ENCODE measurements at regions of chr3 and their contacts with region 1.

Region 1: DNA sequence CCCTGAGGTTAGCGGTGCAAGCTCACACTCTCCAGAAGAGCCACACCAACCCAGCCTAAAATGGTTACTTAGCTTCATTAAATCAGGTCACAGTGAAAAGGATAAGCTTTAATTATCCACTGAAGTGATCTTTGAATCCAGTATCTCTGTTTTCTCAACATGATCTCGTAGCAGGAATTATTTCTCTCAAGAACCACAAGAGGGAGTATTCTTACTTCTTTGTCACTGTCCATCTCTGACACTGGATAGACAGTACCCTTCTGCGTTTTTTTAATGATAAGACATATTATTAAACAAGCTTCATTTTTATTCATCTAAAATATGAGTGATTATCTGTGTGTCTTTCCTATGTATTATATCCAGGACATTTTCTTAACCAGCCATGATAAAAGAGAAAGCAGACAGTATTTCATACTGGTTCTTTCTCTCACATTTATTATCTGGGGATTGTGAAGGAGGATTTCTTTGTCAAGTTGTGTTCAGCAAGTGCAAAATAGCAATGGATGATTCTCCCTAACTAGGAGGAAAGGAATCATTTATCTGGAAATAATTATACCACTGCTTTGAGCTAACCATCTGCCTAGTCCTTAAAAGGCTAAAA is 105.4 kb upstream of the CCDC54 start:
- DNase-seq: no peak
- ATAC-seq: peak; percentile 50 to 78 (median 77)
- H3K4me3 ChIP-seq: no peak overlapping the region
- H3K27ac ChIP-seq: no peak overlapping the region
- H3K4me1 ChIP-seq: no peaks in the 10 kb centered on the region
- H3K27me3 ChIP-seq: no peaks in the 10 kb centered on the region
- CTCF ChIP-seq: peak in 2 of 4 donors; percentile 62 to 63

Region 2: DNA sequence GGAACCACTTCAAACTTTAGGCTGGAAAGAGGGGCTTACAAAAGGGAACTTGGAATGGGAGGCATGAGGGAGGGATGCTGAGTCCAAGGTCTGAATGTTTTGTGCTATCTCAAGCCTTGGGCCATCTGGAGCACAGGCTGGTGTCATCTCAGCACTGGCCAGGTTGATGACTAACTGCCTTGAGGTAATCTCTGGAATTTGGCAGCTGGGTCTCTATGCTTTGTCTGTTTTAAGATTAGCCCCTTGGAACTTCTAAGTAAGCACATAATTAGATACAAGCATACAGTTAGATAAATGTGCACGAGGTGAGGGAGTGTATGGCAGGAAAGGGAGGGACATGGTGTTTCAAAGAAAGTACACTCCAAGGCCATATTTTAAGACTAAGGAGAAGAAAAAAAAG is 147.0 kb before region 1 on chr3:
- intact Hi-C with region 1: no loop called
- DNase-seq: no peak
- ATAC-seq: peak in 1 of 4 donors; percentile 29
- H3K4me3 ChIP-seq: no peak overlapping the region
- H3K27ac ChIP-seq: no peak overlapping the region
- H3K4me1 ChIP-seq: no peaks in the 10 kb centered on the region
- H3K27me3 ChIP-seq: no peaks in the 10 kb centered on the region
- CTCF ChIP-seq: no peak

Region 3: DNA sequence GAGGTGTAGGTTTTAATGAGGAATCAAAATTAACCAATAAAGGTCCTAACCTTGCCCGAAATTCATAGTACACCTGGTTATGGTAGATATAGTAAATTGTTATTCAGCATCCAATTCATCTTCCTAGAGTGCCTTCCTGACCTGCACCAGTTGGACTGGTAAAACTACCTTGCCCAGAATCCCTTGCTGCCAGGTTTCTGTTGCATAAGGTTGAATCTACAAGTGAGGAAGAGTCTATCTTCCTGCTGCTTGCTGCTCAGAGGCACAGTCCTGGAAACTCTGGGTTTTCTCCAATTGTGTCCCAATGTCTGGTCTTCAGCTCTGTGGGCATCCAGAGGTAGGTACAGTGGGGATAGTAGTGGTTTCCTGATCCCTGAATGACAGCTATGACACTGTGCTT is 122.6 kb after region 1 on chr3:
- intact Hi-C with region 1: no loop called
- DNase-seq: no peak
- ATAC-seq: no peak
- H3K4me3 ChIP-seq: no peak overlapping the region
- H3K27ac ChIP-seq: no peak overlapping the region
- H3K4me1 ChIP-seq: no peaks in the 10 kb centered on the region
- H3K27me3 ChIP-seq: no peaks in the 10 kb centered on the region
- CTCF ChIP-seq: no peak

Region 4: GRCh38 chr3:107414325-107414964 is 142.6 kb after region 1 on chr3:
- intact Hi-C with region 1: loop called in 2 of 3 experiments (anchors 10 kb)
- DNase-seq: no peak
- ATAC-seq: no peak
- H3K4me3 ChIP-seq: no peak overlapping the region
- H3K27ac ChIP-seq: no peak overlapping the region
- H3K4me1 ChIP-seq: no peaks in the 10 kb centered on the region
- H3K27me3 ChIP-seq: no peaks in the 10 kb centered on the region
- CTCF ChIP-seq: no peak

Measured in pancreas (tissue), 10 donors.